ENCODE measurements at regions of chr18 and their contacts with region 1.

Region 1: GRCh38 chr18:61893971-61894750 is 1.4 kb upstream of the RNF152 start:
- DNase-seq: peak; percentile 77 to 78
- H3K4me3 ChIP-seq: peak overlapping the region; percentile 81 to 93 (median 84)
- H3K27ac ChIP-seq: peak overlapping the region; percentile 82 to 93
- H3K4me1 ChIP-seq: no peaks in the 10 kb centered on the region
- H3K27me3 ChIP-seq: no peaks in the 10 kb centered on the region
- CTCF ChIP-seq: peak in 2 of 3 donors; percentile 18 to 47
- POLR2A ChIP-seq: no peak

Region 2: GRCh38 chr18:61581578-61582201 is 312.5 kb before region 1 on chr18:
- intact Hi-C with region 1: loop called (anchors 10 kb)
- DNase-seq: peak; percentile 70 to 82
- H3K4me3 ChIP-seq: peak overlapping the region; percentile 30 to 69 (median 46)
- H3K27ac ChIP-seq: peak overlapping the region; percentile 37 to 70
- H3K4me1 ChIP-seq: no peaks in the 10 kb centered on the region
- H3K27me3 ChIP-seq: no peaks in the 10 kb centered on the region
- CTCF ChIP-seq: peak; percentile 88 to 96 (median 96)
- POLR2A ChIP-seq: no peak

Region 3: GRCh38 chr18:61972389-61973264 is 78.5 kb after region 1 on chr18:
- intact Hi-C with region 1: no loop called
- DNase-seq: no peak
- H3K4me3 ChIP-seq: no peak overlapping the region
- H3K27ac ChIP-seq: no peak overlapping the region
- H3K4me1 ChIP-seq: no peaks in the 10 kb centered on the region
- H3K27me3 ChIP-seq: no peaks in the 10 kb centered on the region
- CTCF ChIP-seq: no peak
- POLR2A ChIP-seq: no peak

Measured in breast epithelium (tissue), 4 donors.